Natural killer cell (primary cell): ENCODE measurements at regions of chr4 and their contacts with region 1.

Region 1: GRCh38 chr4:42282081-42282901 is 115.0 kb upstream of the SHISA3 start:
- DNase-seq: peak in 1 of 2 donors; percentile 64
- ATAC-seq: peak in 2 of 3 donors; percentile 64 to 77
- H3K4me3 ChIP-seq: no peak overlapping the region
- H3K4me3 Mint-ChIP-seq: no peak overlapping the region
- H3K27ac ChIP-seq: no peak overlapping the region
- H3K27ac Mint-ChIP-seq: no peak overlapping the region
- H3K4me1 ChIP-seq: peaks cover 7% of the 10 kb centered on the region
- H3K4me1 Mint-ChIP-seq: peaks cover 7 to 12% of the 10 kb centered on the region in 2 donors
- H3K27me3 ChIP-seq: no peaks in the 10 kb centered on the region
- H3K27me3 Mint-ChIP-seq: peaks cover 7% of the 10 kb centered on the region in 2 donors
- CTCF ChIP-seq: peak; percentile 40

Region 2: GRCh38 chr4:42519803-42520417 is 237.6 kb after region 1 on chr4:
- intact Hi-C with region 1: loop called (anchors 10 kb)
- DNase-seq: peak in 1 of 2 donors; percentile 72
- ATAC-seq: peak; percentile 46 to 67 (median 49)
- H3K4me3 ChIP-seq: no peak overlapping the region
- H3K4me3 Mint-ChIP-seq: no peak overlapping the region
- H3K27ac ChIP-seq: no peak overlapping the region
- H3K27ac Mint-ChIP-seq: no peak overlapping the region
- H3K4me1 ChIP-seq: no peaks in the 10 kb centered on the region
- H3K4me1 Mint-ChIP-seq: peaks cover 0 to 10% of the 10 kb centered on the region in 2 donors
- H3K27me3 ChIP-seq: no peaks in the 10 kb centered on the region
- H3K27me3 Mint-ChIP-seq: no peaks in the 10 kb centered on the region
- CTCF ChIP-seq: peak; percentile 81

Region 3: DNA sequence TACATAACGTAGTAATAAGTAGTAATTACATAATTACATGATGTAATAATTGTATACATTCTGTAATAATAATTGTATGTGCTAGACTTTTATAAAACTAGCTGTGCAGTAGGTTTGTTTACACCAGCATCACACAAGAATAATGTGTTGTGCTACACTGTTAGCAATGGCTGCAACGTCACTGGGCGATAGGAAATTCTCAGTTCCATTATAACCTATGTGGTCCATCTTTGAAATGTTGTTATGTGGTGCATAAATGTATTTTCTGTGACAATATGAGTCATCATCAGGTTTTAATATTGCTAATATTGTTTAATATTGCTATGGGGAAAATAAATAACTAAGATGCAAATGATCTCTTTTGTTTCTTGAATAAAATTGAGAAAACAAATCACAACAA is 420.6 kb after region 1 on chr4:
- intact Hi-C with region 1: no loop called
- DNase-seq: no peak
- ATAC-seq: no peak
- H3K4me3 ChIP-seq: no peak overlapping the region
- H3K4me3 Mint-ChIP-seq: no peak overlapping the region
- H3K27ac ChIP-seq: no peak overlapping the region
- H3K27ac Mint-ChIP-seq: no peak overlapping the region
- H3K4me1 ChIP-seq: no peaks in the 10 kb centered on the region
- H3K4me1 Mint-ChIP-seq: no peaks in the 10 kb centered on the region
- H3K27me3 ChIP-seq: no peaks in the 10 kb centered on the region
- H3K27me3 Mint-ChIP-seq: no peaks in the 10 kb centered on the region
- CTCF ChIP-seq: no peak